A549 (cell line): ENCODE measurements at regions of chr17 and their contacts with region 1.

Region 1: GRCh38 chr17:15944759-15945529 is at the start of gene ADORA2B:
- DNase-seq: peak; percentile 75 to 91
- ATAC-seq: peak; percentile 85 to 88
- H3K4me3 ChIP-seq: peak within 1 kb of the TSS; percentile 78
- H3K27ac ChIP-seq: peak within 1 kb of the TSS; percentile 90 to 95
- H3K4me1 ChIP-seq: peaks cover 27% of the 10 kb centered on the region
- CTCF ChIP-seq: peak; percentile 71
- EP300 ChIP-seq: no peak
- POLR2A ChIP-seq: peak; percentile 48
- RAD21 ChIP-seq: peak; percentile 72 to 93
- polyA plus RNA-seq, gene ADORA2B: 10.2 and 14.4 TPM in 2 replicates

Region 2: DNA sequence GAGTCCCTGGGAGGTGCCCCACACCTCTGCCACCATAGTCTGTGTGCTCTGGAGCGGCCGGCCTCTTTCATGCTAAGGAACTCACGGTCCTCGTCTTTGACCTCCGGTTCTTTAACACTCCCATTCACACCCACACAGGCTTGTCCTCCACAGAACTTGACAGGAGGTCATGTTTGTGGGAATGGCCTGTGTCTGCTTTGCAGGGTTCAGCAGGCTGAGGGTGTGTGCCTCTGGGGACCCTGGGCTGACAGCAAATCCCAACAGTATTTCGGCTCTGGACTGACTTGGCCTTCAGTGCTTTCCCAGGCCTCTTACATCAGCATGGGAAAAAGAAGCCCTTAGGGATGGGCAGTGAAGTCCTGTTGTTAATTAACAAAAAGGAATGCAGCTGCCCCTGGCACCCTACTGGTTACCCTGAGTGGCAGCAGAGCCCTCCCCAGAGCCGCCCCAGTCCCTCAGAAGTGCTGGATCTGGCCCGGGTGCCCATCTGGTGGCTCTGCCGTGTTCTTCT is 35.4 kb before region 1 on chr17:
- CTCF ChIA-PET with region 1: interaction called, 29 read pairs
- POLR2A ChIA-PET with region 1: no interaction called
- DNase-seq: peak; percentile 79 to 82
- ATAC-seq: peak; percentile 64 to 81
- H3K4me3 ChIP-seq: no peak overlapping the region
- H3K27ac ChIP-seq: peak overlapping the region; percentile 63 to 81
- H3K4me1 ChIP-seq: peaks cover 27% of the 10 kb centered on the region
- CTCF ChIP-seq: no peak
- EP300 ChIP-seq: no peak
- POLR2A ChIP-seq: no peak
- RAD21 ChIP-seq: no peak

Region 3: GRCh38 chr17:15920758-15921239 is 24.1 kb before region 1 on chr17:
- CTCF ChIA-PET with region 1: interaction called, 29 read pairs
- POLR2A ChIA-PET with region 1: no interaction called
- DNase-seq: peak; percentile 77 to 95
- ATAC-seq: peak; percentile 89 to 96
- H3K4me3 ChIP-seq: no peak overlapping the region
- H3K27ac ChIP-seq: peak overlapping the region; percentile 71 to 84
- H3K4me1 ChIP-seq: peaks cover 33% of the 10 kb centered on the region
- CTCF ChIP-seq: no peak
- EP300 ChIP-seq: peak; percentile 89 to 95; a peak in 3 of 5 replicates
- POLR2A ChIP-seq: no peak
- RAD21 ChIP-seq: peak; percentile 22 to 65

Region 4: GRCh38 chr17:15934866-15935265 is 10.1 kb before region 1 on chr17:
- CTCF ChIA-PET with region 1: interaction called, 41 read pairs
- POLR2A ChIA-PET with region 1: no interaction called
- DNase-seq: no peak
- ATAC-seq: no peak
- H3K4me3 ChIP-seq: no peak overlapping the region
- H3K27ac ChIP-seq: no peak overlapping the region
- H3K4me1 ChIP-seq: no peaks in the 10 kb centered on the region
- CTCF ChIP-seq: no peak
- EP300 ChIP-seq: no peak
- POLR2A ChIP-seq: no peak
- RAD21 ChIP-seq: no peak

Region 5: DNA sequence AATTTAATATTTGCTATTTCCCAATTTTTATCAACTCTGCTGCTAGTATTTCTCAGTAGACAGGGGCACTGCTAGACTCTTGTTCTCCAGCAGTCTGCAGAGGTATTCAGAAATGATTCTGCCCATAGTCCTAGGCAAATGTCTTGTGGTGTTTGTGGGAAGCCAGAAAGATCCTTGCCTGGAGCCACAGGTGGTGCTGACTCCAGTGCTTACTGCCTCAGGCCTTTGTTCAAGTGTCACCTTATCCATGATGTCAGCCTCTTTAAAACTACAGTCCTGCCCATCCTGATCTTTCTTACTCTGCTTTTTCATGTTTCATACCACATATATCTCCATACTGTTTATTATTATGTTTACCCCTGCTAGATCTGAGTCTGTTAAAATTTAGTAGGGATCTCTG is 28.1 kb after region 1 on chr17:
- CTCF ChIA-PET with region 1: interaction called, 21 read pairs
- POLR2A ChIA-PET with region 1: interaction called, 3 read pairs
- DNase-seq: no peak
- ATAC-seq: no peak
- H3K4me3 ChIP-seq: no peak overlapping the region
- H3K27ac ChIP-seq: no peak overlapping the region
- H3K4me1 ChIP-seq: no peaks in the 10 kb centered on the region
- CTCF ChIP-seq: no peak
- EP300 ChIP-seq: no peak
- POLR2A ChIP-seq: no peak
- RAD21 ChIP-seq: no peak

Region 6: GRCh38 chr17:16007439-16007838 is 62.5 kb after region 1 on chr17:
- CTCF ChIA-PET with region 1: interaction called, 10 read pairs
- POLR2A ChIA-PET with region 1: no interaction called
- DNase-seq: no peak
- ATAC-seq: no peak
- H3K4me3 ChIP-seq: no peak overlapping the region
- H3K27ac ChIP-seq: no peak overlapping the region
- H3K4me1 ChIP-seq: peaks cover 13% of the 10 kb centered on the region
- CTCF ChIP-seq: no peak
- EP300 ChIP-seq: no peak
- POLR2A ChIP-seq: no peak
- RAD21 ChIP-seq: no peak

Region 7: GRCh38 chr17:16023881-16024280 is 78.9 kb after region 1 on chr17:
- CTCF ChIA-PET with region 1: no interaction called
- POLR2A ChIA-PET with region 1: no interaction called
- DNase-seq: no peak
- ATAC-seq: no peak
- H3K4me3 ChIP-seq: no peak overlapping the region
- H3K27ac ChIP-seq: no peak overlapping the region
- H3K4me1 ChIP-seq: peaks cover 21% of the 10 kb centered on the region
- CTCF ChIP-seq: no peak
- EP300 ChIP-seq: no peak
- POLR2A ChIP-seq: no peak
- RAD21 ChIP-seq: no peak